ENCODE measurements at regions of chr6 and their contacts with region 1.

Region 1: GRCh38 chr6:43391440-43392031 is 22.1 kb upstream of the ZNF318 start:
- DNase-seq: no peak
- CTCF ChIP-seq: no peak

Region 2: GRCh38 chr6:43376551-43376981 is 15.0 kb before region 1 on chr6:
- CTCF ChIA-PET with region 1: interaction called, 15 read pairs
- POLR2A ChIA-PET with region 1: no interaction called
- DNase-seq: no peak
- CTCF ChIP-seq: no peak

Region 3: DNA sequence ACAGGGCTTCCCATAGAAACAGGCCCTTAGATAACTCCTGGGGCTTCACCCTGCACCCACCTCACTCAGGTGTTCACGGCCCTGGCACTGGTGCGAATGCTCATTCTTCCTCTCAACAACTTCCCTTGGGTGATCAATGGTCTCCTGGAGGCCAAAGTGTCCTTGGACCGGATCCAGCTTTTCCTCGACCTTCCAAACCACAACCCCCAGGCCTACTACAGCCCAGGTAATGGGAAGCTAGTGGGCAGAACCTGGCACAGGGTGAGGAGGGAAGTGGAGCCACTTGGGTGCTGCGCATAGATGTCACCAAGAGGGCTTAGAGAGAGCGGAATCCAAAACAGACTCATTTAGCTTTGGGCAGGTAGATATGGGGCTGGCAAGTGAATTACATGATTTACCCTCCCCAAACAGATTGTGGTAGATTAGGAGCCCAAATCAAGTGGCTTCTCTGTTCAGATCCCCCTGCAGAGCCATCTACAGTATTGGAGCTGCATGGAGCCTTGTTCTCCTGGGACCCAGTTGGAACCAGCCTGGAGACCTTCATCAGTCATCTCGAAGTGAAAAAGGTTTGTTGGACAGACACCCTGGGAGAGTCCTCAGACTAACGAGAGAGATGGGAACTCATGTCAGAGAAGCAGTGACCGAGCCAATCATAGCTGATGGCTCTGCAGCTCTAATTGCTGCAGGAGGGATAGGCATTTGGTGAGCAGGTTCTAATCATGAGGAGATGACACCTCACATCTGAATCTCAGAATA is 44.3 kb after region 1 on chr6:
- CTCF ChIA-PET with region 1: no interaction called
- POLR2A ChIA-PET with region 1: no interaction called
- DNase-seq: no peak
- CTCF ChIP-seq: no peak

Measured in GM10248 (cell line).